ENCODE measurements at regions of chr13 and their contacts with region 1.

Region 1: GRCh38 chr13:70714993-70715392 is 606.7 kb upstream of the KLHL1 start:
- DNase-seq: no peak
- H3K4me3 ChIP-seq: no peak overlapping the region
- H3K27ac ChIP-seq: no peak overlapping the region
- H3K4me1 ChIP-seq: no peaks in the 10 kb centered on the region
- H3K27me3 ChIP-seq: no peaks in the 10 kb centered on the region
- CTCF ChIP-seq: no peak
- POLR2A ChIP-seq: no peak

Region 2: DNA sequence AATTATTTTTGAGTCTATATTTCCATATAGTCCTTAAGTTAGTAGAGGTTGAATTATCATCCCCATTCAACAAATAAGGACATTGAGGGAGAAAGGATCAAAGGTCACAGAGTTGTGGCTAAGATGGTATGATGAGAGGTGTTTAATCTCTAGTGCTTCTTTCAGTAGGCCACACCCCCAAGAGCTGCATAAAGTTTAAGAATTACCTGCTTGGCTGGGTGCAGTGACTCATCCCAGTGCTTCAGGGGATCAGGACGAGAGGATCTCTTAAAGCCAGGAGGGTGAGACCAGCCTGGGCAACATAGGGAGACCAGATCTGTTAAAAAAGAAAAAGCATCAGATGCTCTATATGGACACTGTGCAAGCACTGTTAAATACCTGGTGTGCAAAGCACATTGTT is 46.7 kb before region 1 on chr13:
- intact Hi-C with region 1: loop called (anchors 5 kb)
- DNase-seq: no peak
- H3K4me3 ChIP-seq: no peak overlapping the region
- H3K27ac ChIP-seq: no peak overlapping the region
- H3K4me1 ChIP-seq: no peaks in the 10 kb centered on the region
- H3K27me3 ChIP-seq: no peaks in the 10 kb centered on the region
- CTCF ChIP-seq: no peak
- POLR2A ChIP-seq: no peak

Region 3: GRCh38 chr13:71046360-71047079 is 331.5 kb after region 1 on chr13:
- intact Hi-C with region 1: no loop called
- DNase-seq: no peak
- H3K4me3 ChIP-seq: no peak overlapping the region
- H3K27ac ChIP-seq: no peak overlapping the region
- H3K4me1 ChIP-seq: no peaks in the 10 kb centered on the region
- H3K27me3 ChIP-seq: no peaks in the 10 kb centered on the region
- CTCF ChIP-seq: no peak
- POLR2A ChIP-seq: no peak